ENCODE measurements at regions of chr4 and their contacts with region 1.

Region 1: GRCh38 chr4:153432968-153433753 is 33.0 kb upstream of the TMEM131L start:
- H3K4me3 Mint-ChIP-seq: peak overlapping the region; percentile 83
- H3K27ac Mint-ChIP-seq: peak overlapping the region; percentile 91
- H3K4me1 Mint-ChIP-seq: peaks cover 16% of the 10 kb centered on the region
- H3K27me3 Mint-ChIP-seq: peaks cover 59% of the 10 kb centered on the region

Region 2: GRCh38 chr4:153344131-153345010 is 88.8 kb before region 1 on chr4 and contains the start of gene MND1:
- intact Hi-C with region 1: loop called (anchors 2 kb)
- H3K4me3 Mint-ChIP-seq: peak within 1 kb of the TSS; percentile 79
- H3K27ac Mint-ChIP-seq: no peak within 1 kb of the TSS
- H3K4me1 Mint-ChIP-seq: peaks cover 14% of the 10 kb centered on the region
- H3K27me3 Mint-ChIP-seq: peaks cover 38% of the 10 kb centered on the region

Region 3: DNA sequence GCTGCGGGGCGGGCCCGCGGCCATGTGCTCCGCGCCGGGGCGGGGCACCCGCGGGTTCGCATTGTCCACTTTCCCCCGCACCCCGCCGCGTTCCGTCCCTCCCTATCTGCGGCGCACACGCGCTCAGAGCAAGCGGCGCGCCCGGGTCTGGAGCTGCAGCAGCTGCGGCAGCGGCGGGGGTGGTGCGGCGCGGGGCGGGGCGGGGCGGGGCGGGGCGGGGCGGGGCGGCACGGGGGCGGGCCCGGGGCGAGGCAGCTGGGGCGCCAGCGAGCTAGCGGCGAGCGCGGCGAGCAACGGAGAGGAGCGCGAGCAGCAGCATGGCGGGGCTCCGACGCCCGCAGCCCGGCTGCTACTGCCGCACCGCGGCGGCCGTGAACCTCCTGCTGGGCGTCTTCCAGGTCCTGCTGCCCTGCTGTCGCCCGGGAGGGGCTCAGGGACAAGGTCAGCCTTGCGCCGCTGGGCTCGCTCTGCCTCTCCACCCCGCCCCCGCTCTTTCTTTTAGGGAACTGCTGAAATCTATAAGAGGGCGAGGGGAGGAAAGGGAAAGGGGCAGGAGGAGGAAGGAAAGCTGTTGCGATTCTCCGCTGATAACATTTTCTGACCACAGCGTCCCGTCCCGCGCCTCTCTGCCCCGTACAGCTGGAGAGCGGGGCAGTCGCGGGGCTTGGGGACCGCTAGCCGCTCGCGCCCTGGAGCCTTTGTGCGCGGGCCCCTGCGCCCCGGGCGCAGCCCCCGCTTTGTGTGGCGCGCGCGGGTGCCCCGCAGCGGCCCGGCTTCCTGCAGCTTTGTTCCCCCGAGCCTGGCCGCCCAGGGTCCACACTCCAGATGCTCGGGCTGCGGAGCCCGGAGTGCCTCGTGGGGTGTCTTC is 33.2 kb after region 1 on chr4 and contains the start of gene TMEM131L:
- intact Hi-C with region 1: loop called (anchors 1 kb)
- H3K4me3 Mint-ChIP-seq: peak within 1 kb of the TSS; percentile 91
- H3K27ac Mint-ChIP-seq: peak within 1 kb of the TSS; percentile 79
- H3K4me1 Mint-ChIP-seq: peaks cover 42% of the 10 kb centered on the region
- H3K27me3 Mint-ChIP-seq: peaks cover 12% of the 10 kb centered on the region

Region 4: DNA sequence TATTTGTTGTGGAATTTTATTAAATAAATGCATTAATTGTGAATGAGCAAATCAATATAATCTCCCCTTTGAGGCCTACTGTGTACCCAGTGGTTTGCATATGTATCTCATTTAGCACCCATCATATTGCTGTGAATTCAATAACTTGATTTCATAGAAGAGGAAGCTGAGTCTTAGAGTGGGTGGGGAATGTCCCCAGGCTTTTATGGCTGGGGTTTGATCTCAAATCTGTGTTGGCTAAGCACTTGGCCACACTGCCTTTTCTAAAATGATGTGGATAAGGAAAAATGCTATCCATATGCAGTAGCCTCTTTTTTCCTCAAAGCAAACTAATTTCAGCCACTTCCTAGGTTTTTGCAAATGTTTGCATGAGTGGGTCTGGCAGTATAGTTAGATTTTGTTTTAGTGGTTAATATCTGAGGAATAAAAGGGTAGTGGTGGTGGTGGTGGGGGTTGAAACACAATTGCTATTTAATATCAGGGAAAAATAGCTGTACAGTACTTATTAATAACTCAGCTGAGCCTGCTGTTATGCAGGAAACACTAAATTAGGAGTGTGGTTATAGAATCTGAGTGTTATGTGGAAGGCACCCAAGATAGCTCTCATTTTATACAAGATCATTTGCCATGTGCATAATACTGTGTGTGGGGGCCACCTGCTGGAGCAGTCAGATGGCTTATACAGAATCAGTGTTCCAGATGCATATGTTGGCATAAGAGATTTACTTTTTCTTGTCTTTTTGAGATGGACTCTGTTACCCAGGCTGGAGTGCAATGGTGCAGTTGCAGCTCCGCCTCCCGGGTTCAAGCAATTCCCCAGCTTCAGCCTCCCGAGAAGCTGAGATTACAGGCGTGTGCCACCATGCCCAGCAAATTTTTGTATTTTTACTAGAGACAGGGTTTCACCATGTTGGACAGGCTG is 141.0 kb after region 1 on chr4:
- intact Hi-C with region 1: loop called (anchors 1 kb)
- H3K4me3 Mint-ChIP-seq: no peak overlapping the region
- H3K27ac Mint-ChIP-seq: no peak overlapping the region
- H3K4me1 Mint-ChIP-seq: peaks cover 9% of the 10 kb centered on the region
- H3K27me3 Mint-ChIP-seq: peaks cover 8% of the 10 kb centered on the region

Region 5: GRCh38 chr4:153750197-153750817 is 317.1 kb after region 1 on chr4:
- intact Hi-C with region 1: loop called (anchors 10 kb)
- H3K4me3 Mint-ChIP-seq: no peak overlapping the region
- H3K27ac Mint-ChIP-seq: no peak overlapping the region
- H3K4me1 Mint-ChIP-seq: peaks cover 35% of the 10 kb centered on the region
- H3K27me3 Mint-ChIP-seq: no peaks in the 10 kb centered on the region